CD4-positive, alpha-beta memory T cell (primary cell): ENCODE measurements at regions of chr6 and their contacts with region 1.

Region 1: DNA sequence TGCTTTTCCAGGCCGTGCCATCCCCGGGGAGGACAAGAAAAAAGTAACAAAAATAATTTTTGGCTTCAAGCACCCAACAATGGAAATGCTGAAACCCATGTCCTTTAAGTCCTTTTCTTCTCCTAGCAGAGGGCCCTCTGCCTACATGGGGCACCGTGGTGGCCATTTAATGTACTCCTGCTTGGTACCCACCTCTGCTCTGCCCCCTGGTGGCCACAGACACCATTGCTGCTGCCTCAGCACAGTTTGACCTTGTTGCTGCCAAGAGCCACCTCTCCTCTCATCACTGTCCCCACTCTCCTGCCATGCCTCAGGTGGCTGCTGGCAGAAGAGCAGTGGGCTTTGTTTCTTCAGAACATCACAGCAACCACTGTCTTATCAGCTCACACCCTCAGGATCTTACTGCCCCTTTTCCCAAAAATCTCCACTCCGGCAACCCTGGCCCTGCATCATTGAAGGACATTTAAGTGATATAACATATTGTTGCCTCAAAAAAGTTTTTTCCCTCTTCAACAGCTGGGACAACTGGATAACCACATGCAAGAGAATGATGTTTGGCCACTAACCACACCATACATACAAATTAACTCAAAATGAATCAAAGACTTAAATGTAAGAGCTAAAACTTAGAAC is 12.9 kb upstream of the ARMC2 start:
- DNase-seq: peak; percentile 76 to 78 (median 77)
- H3K4me3 ChIP-seq: no peak overlapping the region
- H3K4me3 Mint-ChIP-seq: no peak overlapping the region
- H3K27ac ChIP-seq: no peak overlapping the region
- H3K27ac Mint-ChIP-seq: peak overlapping the region in 2 of 7 donors; percentile 3 to 43
- H3K4me1 ChIP-seq: peaks cover 15% of the 10 kb centered on the region
- H3K4me1 Mint-ChIP-seq: peaks cover 13 to 26% (median 19%) of the 10 kb centered on the region in 4 donors
- H3K27me3 ChIP-seq: no peaks in the 10 kb centered on the region
- H3K27me3 Mint-ChIP-seq: no peaks in the 10 kb centered on the region

Region 2: GRCh38 chr6:108541838-108542759 is 293.2 kb before region 1 on chr6:
- CTCF ChIA-PET with region 1: interaction called, 34 read pairs
- POLR2A ChIA-PET with region 1: no interaction called
- intact Hi-C with region 1: loop called (anchors 1 kb)
- DNase-seq: peak; percentile 71 to 74 (median 73)
- H3K4me3 ChIP-seq: no peak overlapping the region
- H3K4me3 Mint-ChIP-seq: peak overlapping the region in 4 of 8 donors; percentile 16 to 71 (median 56)
- H3K27ac ChIP-seq: no peak overlapping the region
- H3K27ac Mint-ChIP-seq: no peak overlapping the region
- H3K4me1 ChIP-seq: peaks cover 8% of the 10 kb centered on the region
- H3K4me1 Mint-ChIP-seq: peaks cover 6 to 17% (median 8%) of the 10 kb centered on the region in 4 donors
- H3K27me3 ChIP-seq: no peaks in the 10 kb centered on the region
- H3K27me3 Mint-ChIP-seq: peaks cover 4 to 6% of the 10 kb centered on the region in 2 donors

Region 3: GRCh38 chr6:108782179-108783041 is 52.9 kb before region 1 on chr6:
- CTCF ChIA-PET with region 1: interaction called, 5 read pairs
- POLR2A ChIA-PET with region 1: no interaction called
- intact Hi-C with region 1: loop called (anchors 1 kb)
- DNase-seq: peak; percentile 69 to 74 (median 72)
- H3K4me3 ChIP-seq: peak overlapping the region in 1 of 2 donors; percentile 40
- H3K4me3 Mint-ChIP-seq: peak overlapping the region; percentile 78 to 93 (median 87)
- H3K27ac ChIP-seq: no peak overlapping the region
- H3K27ac Mint-ChIP-seq: peak overlapping the region in 5 of 7 donors; percentile 24 to 78 (median 47)
- H3K4me1 ChIP-seq: peaks cover 5% of the 10 kb centered on the region
- H3K4me1 Mint-ChIP-seq: peaks cover 4 to 11% (median 7%) of the 10 kb centered on the region in 4 donors
- H3K27me3 ChIP-seq: no peaks in the 10 kb centered on the region
- H3K27me3 Mint-ChIP-seq: no peaks in the 10 kb centered on the region

Region 4: GRCh38 chr6:108798670-108799353 is 36.5 kb before region 1 on chr6:
- CTCF ChIA-PET with region 1: interaction called, 8 read pairs
- POLR2A ChIA-PET with region 1: no interaction called
- intact Hi-C with region 1: loop called (anchors 5 kb)
- DNase-seq: peak; percentile 48 to 57 (median 53)
- H3K4me3 ChIP-seq: no peak overlapping the region
- H3K4me3 Mint-ChIP-seq: peak overlapping the region; percentile 21 to 90 (median 80)
- H3K27ac ChIP-seq: peak overlapping the region; percentile 22
- H3K27ac Mint-ChIP-seq: peak overlapping the region; percentile 34 to 96 (median 81)
- H3K4me1 ChIP-seq: peaks cover 32% of the 10 kb centered on the region
- H3K4me1 Mint-ChIP-seq: peaks cover 18 to 38% (median 28%) of the 10 kb centered on the region in 4 donors
- H3K27me3 ChIP-seq: no peaks in the 10 kb centered on the region
- H3K27me3 Mint-ChIP-seq: no peaks in the 10 kb centered on the region

Region 5: DNA sequence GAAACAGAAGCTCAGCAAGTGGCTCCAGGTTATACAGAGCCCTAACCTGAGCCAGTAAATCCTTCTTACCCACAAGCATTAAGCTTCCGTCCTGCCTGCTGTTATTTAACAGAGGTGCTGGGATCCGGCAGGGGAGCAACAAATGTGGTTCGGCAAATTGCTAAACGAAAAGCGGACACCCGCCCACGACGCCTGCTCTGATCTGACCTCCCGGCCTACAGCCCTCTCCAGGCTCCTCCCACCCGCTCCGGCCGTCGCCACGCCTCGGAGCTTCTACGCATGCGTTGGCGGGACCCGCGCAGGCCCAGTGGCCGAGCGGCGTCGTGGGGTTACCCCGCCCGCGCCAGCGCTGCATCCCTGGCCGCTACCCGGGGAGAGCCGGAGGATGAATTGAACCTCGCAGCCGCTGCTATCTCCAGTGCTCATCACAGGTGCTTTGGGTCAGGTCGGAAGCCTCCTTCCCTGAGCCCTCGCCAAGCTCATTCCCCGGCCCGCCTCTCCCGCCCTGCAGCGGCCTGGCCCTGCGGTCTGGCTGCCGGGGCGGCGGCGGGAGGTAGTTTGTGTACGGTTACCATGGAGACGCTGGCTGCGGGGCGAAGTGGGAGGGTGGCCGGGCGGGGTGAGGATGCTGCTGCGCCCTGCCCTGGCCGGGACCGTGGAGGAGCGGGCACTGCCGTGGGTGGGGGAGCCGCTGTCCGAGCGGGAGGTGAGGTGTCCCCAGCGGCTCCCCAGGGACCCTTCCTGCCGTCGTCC is 13.0 kb after region 1 on chr6 and contains the start of gene ARMC2:
- CTCF ChIA-PET with region 1: interaction called, 30 read pairs
- POLR2A ChIA-PET with region 1: interaction called, 5 read pairs
- intact Hi-C with region 1: no loop called
- DNase-seq: peak; percentile 85 to 88 (median 86)
- H3K4me3 ChIP-seq: peak within 1 kb of the TSS; percentile 46 to 78
- H3K4me3 Mint-ChIP-seq: peak within 1 kb of the TSS; percentile 84 to 91 (median 86)
- H3K27ac ChIP-seq: peak within 1 kb of the TSS; percentile 58
- H3K27ac Mint-ChIP-seq: peak within 1 kb of the TSS; percentile 81 to 93 (median 91)
- H3K4me1 ChIP-seq: peaks cover 15% of the 10 kb centered on the region
- H3K4me1 Mint-ChIP-seq: peaks cover 17 to 33% (median 23%) of the 10 kb centered on the region in 4 donors
- H3K27me3 ChIP-seq: no peaks in the 10 kb centered on the region
- H3K27me3 Mint-ChIP-seq: no peaks in the 10 kb centered on the region
- total RNA-seq, gene ARMC2: 10.7 to 11.2 TPM

Region 6: DNA sequence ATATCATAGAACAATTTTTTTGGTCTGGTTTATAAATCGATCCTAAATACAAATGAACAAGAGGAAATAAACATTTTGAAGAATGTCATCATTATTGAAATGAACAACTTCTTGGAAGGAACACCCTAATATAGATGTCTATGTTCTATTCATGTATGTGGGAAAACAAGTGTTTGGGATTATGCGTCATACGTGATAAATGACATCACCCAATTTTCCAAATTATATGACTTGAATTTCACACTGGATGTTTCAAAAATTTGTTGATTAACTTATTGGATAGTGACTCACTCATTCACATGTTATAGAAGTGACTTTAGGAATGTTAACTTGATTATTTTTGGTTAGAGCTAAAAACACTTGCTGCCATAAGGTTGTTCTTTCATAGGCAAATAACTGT is 31.5 kb after region 1 on chr6:
- CTCF ChIA-PET with region 1: interaction called, 12 read pairs
- POLR2A ChIA-PET with region 1: interaction called, 3 read pairs
- intact Hi-C with region 1: no loop called
- DNase-seq: no peak
- H3K4me3 ChIP-seq: no peak overlapping the region
- H3K4me3 Mint-ChIP-seq: no peak overlapping the region
- H3K27ac ChIP-seq: no peak overlapping the region
- H3K27ac Mint-ChIP-seq: no peak overlapping the region
- H3K4me1 ChIP-seq: peaks cover 14% of the 10 kb centered on the region
- H3K4me1 Mint-ChIP-seq: peaks cover 8 to 31% (median 15%) of the 10 kb centered on the region in 4 donors
- H3K27me3 ChIP-seq: no peaks in the 10 kb centered on the region
- H3K27me3 Mint-ChIP-seq: no peaks in the 10 kb centered on the region

Region 7: GRCh38 chr6:108896111-108896661 is 60.9 kb after region 1 on chr6:
- CTCF ChIA-PET with region 1: interaction called, 6 read pairs
- POLR2A ChIA-PET with region 1: no interaction called
- intact Hi-C with region 1: loop called (anchors 1 kb)
- DNase-seq: peak; percentile 49 to 65 (median 53)
- H3K4me3 ChIP-seq: peak overlapping the region in 1 of 2 donors; percentile 2
- H3K4me3 Mint-ChIP-seq: peak overlapping the region; percentile 67 to 83 (median 78)
- H3K27ac ChIP-seq: peak overlapping the region; percentile 27
- H3K27ac Mint-ChIP-seq: peak overlapping the region; percentile 74 to 98 (median 94)
- H3K4me1 ChIP-seq: peaks cover 57% of the 10 kb centered on the region
- H3K4me1 Mint-ChIP-seq: peaks cover 25 to 53% (median 38%) of the 10 kb centered on the region in 4 donors
- H3K27me3 ChIP-seq: no peaks in the 10 kb centered on the region
- H3K27me3 Mint-ChIP-seq: no peaks in the 10 kb centered on the region